ENCODE measurements at regions of chr3 and their contacts with region 1.

Region 1: GRCh38 chr3:25782938-25783660 is at the start of gene NGLY1:
- DNase-seq: peak; percentile 92
- ATAC-seq: peak; percentile 93
- H3K4me3 Mint-ChIP-seq: peak within 1 kb of the TSS; percentile 92
- H3K27ac Mint-ChIP-seq: peak within 1 kb of the TSS; percentile 90
- H3K4me1 Mint-ChIP-seq: peaks cover 54% of the 10 kb centered on the region
- H3K27me3 Mint-ChIP-seq: no peaks in the 10 kb centered on the region
- total RNA-seq, gene NGLY1: 86.1 to 135 TPM

Region 2: GRCh38 chr3:25664810-25665314 is 118.2 kb before region 1 on chr3 and contains the start of gene TOP2B:
- CTCF ChIA-PET with region 1: no interaction called
- POLR2A ChIA-PET with region 1: no interaction called
- intact Hi-C with region 1: loop called (anchors 1 kb)
- DNase-seq: peak; percentile 96
- ATAC-seq: peak; percentile 93
- H3K4me3 Mint-ChIP-seq: peak within 1 kb of the TSS; percentile 83
- H3K27ac Mint-ChIP-seq: peak within 1 kb of the TSS; percentile 100
- H3K4me1 Mint-ChIP-seq: peaks cover 44% of the 10 kb centered on the region
- H3K27me3 Mint-ChIP-seq: no peaks in the 10 kb centered on the region
- total RNA-seq, gene TOP2B: 132 to 156 TPM

Region 3: GRCh38 chr3:25751725-25752124 is 31.4 kb before region 1 on chr3:
- CTCF ChIA-PET with region 1: no interaction called
- POLR2A ChIA-PET with region 1: no interaction called
- intact Hi-C with region 1: no loop called
- DNase-seq: no peak
- ATAC-seq: no peak
- H3K4me3 Mint-ChIP-seq: no peak overlapping the region
- H3K27ac Mint-ChIP-seq: peak overlapping the region; percentile 37
- H3K4me1 Mint-ChIP-seq: peaks cover 12% of the 10 kb centered on the region
- H3K27me3 Mint-ChIP-seq: no peaks in the 10 kb centered on the region

Region 4: GRCh38 chr3:25768851-25769250 is 14.2 kb before region 1 on chr3:
- CTCF ChIA-PET with region 1: interaction called, 5 read pairs
- POLR2A ChIA-PET with region 1: interaction called, 4 read pairs
- intact Hi-C with region 1: loop called in 1 of 2 experiments (anchors 1 kb)
- DNase-seq: no peak
- ATAC-seq: no peak
- H3K4me3 Mint-ChIP-seq: no peak overlapping the region
- H3K27ac Mint-ChIP-seq: no peak overlapping the region
- H3K4me1 Mint-ChIP-seq: peaks cover 27% of the 10 kb centered on the region
- H3K27me3 Mint-ChIP-seq: no peaks in the 10 kb centered on the region

Region 5: DNA sequence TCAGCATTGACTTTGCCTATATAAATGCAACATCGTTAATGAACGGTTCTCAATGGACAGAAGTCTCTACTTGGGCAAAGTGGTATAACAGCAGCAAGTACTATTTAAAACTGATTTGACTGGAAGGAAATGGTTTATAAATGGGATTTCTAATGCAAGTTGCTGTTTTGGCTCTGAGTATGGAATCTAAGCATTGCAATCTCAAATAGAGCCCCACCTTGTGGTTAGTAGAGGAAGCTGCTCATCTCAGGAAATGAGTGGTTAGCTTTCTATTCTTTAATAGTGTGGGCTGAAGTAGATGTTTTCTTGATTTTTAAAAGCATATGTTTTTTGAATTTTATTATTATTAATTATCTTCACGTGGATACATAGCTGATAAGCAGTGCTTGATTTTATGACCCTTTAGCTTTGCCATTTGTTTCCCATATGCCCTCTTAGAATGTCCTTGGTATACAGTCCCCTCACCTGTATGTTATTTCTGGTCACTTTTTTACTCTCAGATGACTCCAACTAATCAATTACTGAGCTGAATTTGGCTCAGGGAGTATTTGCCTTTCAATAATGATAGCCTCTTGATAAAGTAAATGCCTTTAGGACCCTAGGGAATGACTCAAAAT is 73.9 kb after region 1 on chr3:
- CTCF ChIA-PET with region 1: interaction called, 3 read pairs
- POLR2A ChIA-PET with region 1: no interaction called
- intact Hi-C with region 1: loop called (anchors 2 to 5 kb)
- DNase-seq: no peak
- ATAC-seq: peak; percentile 88
- H3K4me3 Mint-ChIP-seq: no peak overlapping the region
- H3K27ac Mint-ChIP-seq: no peak overlapping the region
- H3K4me1 Mint-ChIP-seq: no peaks in the 10 kb centered on the region
- H3K27me3 Mint-ChIP-seq: no peaks in the 10 kb centered on the region

Measured in activated CD4-positive, alpha-beta T cell treated with anti-CD3 and anti-CD28 coated beads for 36 hours (primary cell).